Esophagus muscularis mucosa (tissue), 4 donors: ENCODE measurements at regions of chr1 and their contacts with region 1.

Region 1: GRCh38 chr1:193183019-193183627 is 3.3 kb downstream of the B3GALT2 start:
- DNase-seq: no peak
- H3K4me3 ChIP-seq: peak overlapping the region in 3 of 4 donors; percentile 0 to 36 (median 5)
- H3K27ac ChIP-seq: no peak overlapping the region
- H3K4me1 ChIP-seq: peaks cover 19 to 85% (median 80%) of the 10 kb centered on the region in 4 donors
- H3K27me3 ChIP-seq: no peaks in the 10 kb centered on the region
- CTCF ChIP-seq: peak; percentile 68 to 87 (median 82)
- EP300 ChIP-seq: no peak
- POLR2A ChIP-seq: no peak

Region 2: GRCh38 chr1:193311226-193311948 is 128.3 kb after region 1 on chr1:
- intact Hi-C with region 1: no loop called
- DNase-seq: no peak
- H3K4me3 ChIP-seq: no peak overlapping the region
- H3K27ac ChIP-seq: no peak overlapping the region
- H3K4me1 ChIP-seq: no peaks in the 10 kb centered on the region
- H3K27me3 ChIP-seq: no peaks in the 10 kb centered on the region
- CTCF ChIP-seq: no peak
- EP300 ChIP-seq: no peak
- POLR2A ChIP-seq: no peak

Region 3: DNA sequence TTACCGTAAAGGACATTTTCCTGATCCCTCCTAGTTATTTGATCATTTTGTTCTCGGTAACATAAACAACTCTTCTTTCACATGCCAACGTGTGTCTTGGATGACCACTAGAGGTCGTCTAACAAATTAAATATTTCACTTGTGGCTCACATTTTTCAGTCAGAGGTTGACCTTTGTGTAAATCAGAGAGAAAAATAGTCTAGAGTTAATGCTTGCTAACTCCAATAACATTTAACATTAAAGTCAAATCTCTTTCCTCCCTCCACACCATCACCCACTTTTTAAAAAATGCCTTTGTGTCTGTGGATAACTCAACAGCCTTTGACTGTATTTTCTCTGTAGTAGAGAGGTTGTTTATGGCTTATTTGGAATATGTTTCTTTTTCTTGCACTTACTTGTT is 223.8 kb after region 1 on chr1:
- intact Hi-C with region 1: loop called (anchors 10 kb)
- DNase-seq: no peak
- H3K4me3 ChIP-seq: no peak overlapping the region
- H3K27ac ChIP-seq: peak overlapping the region in 1 of 4 donors; percentile 6
- H3K4me1 ChIP-seq: peaks cover 6 to 39% (median 19%) of the 10 kb centered on the region in 4 donors
- H3K27me3 ChIP-seq: no peaks in the 10 kb centered on the region
- CTCF ChIP-seq: peak; percentile 53 to 73 (median 67)
- EP300 ChIP-seq: no peak
- POLR2A ChIP-seq: no peak

Region 4: DNA sequence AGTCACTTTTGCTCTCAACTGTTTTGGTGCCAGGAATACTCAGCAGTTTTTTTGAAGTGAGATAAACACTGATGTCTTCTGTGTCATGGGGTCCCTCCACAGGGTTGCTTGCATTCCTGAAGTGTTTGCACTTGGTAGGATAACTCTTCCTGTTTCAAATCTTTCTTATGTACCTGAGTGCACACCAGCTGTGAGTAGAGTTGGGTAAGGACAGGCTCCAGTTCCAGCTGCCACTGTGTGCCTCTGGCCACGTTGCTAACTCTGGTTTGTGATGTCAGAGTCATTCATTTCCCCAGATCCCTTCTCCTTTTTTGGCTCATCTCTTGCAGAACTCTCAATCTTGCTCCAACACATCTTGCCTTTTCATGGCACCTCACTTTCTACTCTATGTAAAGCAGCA is 359.6 kb after region 1 on chr1:
- intact Hi-C with region 1: no loop called
- DNase-seq: no peak
- H3K4me3 ChIP-seq: no peak overlapping the region
- H3K27ac ChIP-seq: no peak overlapping the region
- H3K4me1 ChIP-seq: no peaks in the 10 kb centered on the region
- H3K27me3 ChIP-seq: no peaks in the 10 kb centered on the region
- CTCF ChIP-seq: no peak
- EP300 ChIP-seq: no peak
- POLR2A ChIP-seq: no peak

Region 5: GRCh38 chr1:194295685-194296084 is 1112.6 kb after region 1 on chr1:
- intact Hi-C with region 1: loop called (anchors 5 kb)
- DNase-seq: no peak
- H3K4me3 ChIP-seq: no peak overlapping the region
- H3K27ac ChIP-seq: no peak overlapping the region
- H3K4me1 ChIP-seq: no peaks in the 10 kb centered on the region
- H3K27me3 ChIP-seq: no peaks in the 10 kb centered on the region
- CTCF ChIP-seq: peak; percentile 36 to 62 (median 52)
- EP300 ChIP-seq: no peak
- POLR2A ChIP-seq: no peak